ENCODE measurements at regions of chrX and their contacts with region 1.

Region 1: GRCh38 chrX:132171478-132172260 is 43.8 kb upstream of the FRMD7 start:
- DNase-seq: no peak
- ATAC-seq: no peak
- H3K4me3 ChIP-seq: no peak overlapping the region
- H3K27ac ChIP-seq: no peak overlapping the region
- H3K4me1 ChIP-seq: no peaks in the 10 kb centered on the region
- H3K27me3 ChIP-seq: peaks cover 0 to 36% (median 0%) of the 10 kb centered on the region in 9 donors
- CTCF ChIP-seq: peak in 7 of 12 donors; percentile 8 to 44 (median 23)
- POLR2A ChIP-seq: no peak

Region 2: DNA sequence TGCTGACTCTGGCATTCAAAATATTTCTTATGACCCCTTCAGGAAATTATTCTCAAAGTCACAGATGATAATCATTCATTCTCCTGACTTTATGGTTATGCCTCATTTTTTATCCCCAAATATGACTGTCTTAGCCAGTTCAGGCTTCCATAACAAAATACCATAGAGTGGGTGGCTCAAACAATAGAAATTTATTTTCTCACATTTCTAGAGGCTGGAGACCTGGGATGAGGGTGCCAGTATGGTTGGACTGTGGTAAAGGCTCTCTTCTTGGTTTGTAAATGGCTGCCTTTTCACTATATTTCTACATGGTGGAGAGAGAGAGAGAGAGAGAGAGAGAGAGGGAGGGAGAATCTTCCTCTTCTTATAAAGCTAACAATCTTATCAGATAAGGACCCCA is 64.4 kb before region 1 on chrX:
- intact Hi-C with region 1: no loop called
- DNase-seq: no peak
- ATAC-seq: no peak
- H3K4me3 ChIP-seq: no peak overlapping the region
- H3K27ac ChIP-seq: no peak overlapping the region
- H3K4me1 ChIP-seq: no peaks in the 10 kb centered on the region
- H3K27me3 ChIP-seq: peaks cover 0 to 26% (median 0%) of the 10 kb centered on the region in 9 donors
- CTCF ChIP-seq: no peak
- POLR2A ChIP-seq: no peak

Region 3: GRCh38 chrX:132219343-132219768 is 47.7 kb after region 1 on chrX and contains the start of gene RAP2C:
- intact Hi-C with region 1: loop called in 4 of 10 experiments (anchors 2 to 5 kb)
- DNase-seq: peak; percentile 64 to 87 (median 79)
- ATAC-seq: peak; percentile 86 to 90 (median 87)
- H3K4me3 ChIP-seq: peak within 1 kb of the TSS; percentile 40 to 98 (median 80)
- H3K27ac ChIP-seq: peak within 1 kb of the TSS; percentile 88 to 99 (median 96)
- H3K4me1 ChIP-seq: peaks cover 0 to 26% (median 10%) of the 10 kb centered on the region in 12 donors
- H3K27me3 ChIP-seq: peaks cover 0 to 13% (median 0%) of the 10 kb centered on the region in 9 donors
- CTCF ChIP-seq: peak; percentile 37 to 71 (median 54)
- POLR2A ChIP-seq: no peak
- total RNA-seq, gene RAP2C: 8.2 to 23.6 (median 16.7) TPM

Measured in heart left ventricle (tissue), 16 donors.